ENCODE measurements at regions of chr12 and their contacts with region 1.

Region 1: GRCh38 chr12:121980191-121980891 is 41.3 kb upstream of the BCL7A start:
- DNase-seq: peak; percentile 98
- H3K4me3 ChIP-seq: peak overlapping the region; percentile 38
- H3K27ac ChIP-seq: peak overlapping the region; percentile 99
- H3K4me1 ChIP-seq: peaks cover 74% of the 10 kb centered on the region
- CTCF ChIP-seq: 0 out of 2 replicates have a peak, but pooled peaks have one; percentile 11

Region 2: DNA sequence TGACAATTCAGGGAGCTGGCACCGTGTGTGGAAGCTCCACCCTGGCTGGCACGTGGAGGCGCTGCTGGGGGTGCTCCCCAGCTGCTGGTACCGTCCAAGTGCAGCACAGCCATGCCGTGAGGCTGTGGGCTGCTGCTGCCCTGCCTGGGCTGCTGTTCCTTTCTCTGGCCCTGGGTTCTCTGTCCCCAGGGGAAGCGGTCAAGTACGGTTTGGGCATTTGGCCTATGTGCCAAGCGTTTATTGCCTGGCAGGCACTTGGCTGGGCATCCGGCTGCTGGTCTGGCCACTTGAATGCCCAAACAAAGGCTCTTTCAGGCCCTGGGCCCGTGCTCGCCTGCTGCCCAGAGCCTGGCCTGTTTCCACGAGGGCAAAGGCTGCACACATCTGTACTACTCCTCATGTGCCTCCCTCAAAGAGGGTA is 226.5 kb before region 1 on chr12:
- CTCF ChIA-PET with region 1: no interaction called
- POLR2A ChIA-PET with region 1: no interaction called
- intact Hi-C with region 1: no loop called
- DNase-seq: no peak
- H3K4me3 ChIP-seq: no peak overlapping the region
- H3K27ac ChIP-seq: no peak overlapping the region
- H3K4me1 ChIP-seq: no peaks in the 10 kb centered on the region
- CTCF ChIP-seq: no peak

Region 3: GRCh38 chr12:121802846-121803630 is 177.3 kb before region 1 on chr12:
- CTCF ChIA-PET with region 1: no interaction called
- POLR2A ChIA-PET with region 1: interaction called, 4 read pairs
- intact Hi-C with region 1: loop called (anchors 2 kb)
- DNase-seq: peak; percentile 93
- H3K4me3 ChIP-seq: peak overlapping the region; percentile 75
- H3K27ac ChIP-seq: peak overlapping the region; percentile 95
- H3K4me1 ChIP-seq: peaks cover 69% of the 10 kb centered on the region
- CTCF ChIP-seq: no peak

Region 4: GRCh38 chr12:121872546-121873215 is 107.7 kb before region 1 on chr12:
- CTCF ChIA-PET with region 1: no interaction called
- POLR2A ChIA-PET with region 1: no interaction called
- intact Hi-C with region 1: no loop called
- DNase-seq: no peak
- H3K4me3 ChIP-seq: no peak overlapping the region
- H3K27ac ChIP-seq: no peak overlapping the region
- H3K4me1 ChIP-seq: no peaks in the 10 kb centered on the region
- CTCF ChIP-seq: no peak

Region 5: GRCh38 chr12:121917979-121918678 is 62.2 kb before region 1 on chr12 and contains the start of gene CFAP251:
- CTCF ChIA-PET with region 1: interaction called, 5 read pairs
- POLR2A ChIA-PET with region 1: interaction called, 3 read pairs
- intact Hi-C with region 1: loop called (anchors 1 kb)
- DNase-seq: peak; percentile 96
- H3K4me3 ChIP-seq: peak within 1 kb of the TSS; percentile 69
- H3K27ac ChIP-seq: peak within 1 kb of the TSS; percentile 45
- H3K4me1 ChIP-seq: peaks cover 37% of the 10 kb centered on the region
- CTCF ChIP-seq: peak; percentile 75
- total RNA-seq, gene CFAP251: 4.1 and 6.6 TPM in 2 replicates

Region 6: DNA sequence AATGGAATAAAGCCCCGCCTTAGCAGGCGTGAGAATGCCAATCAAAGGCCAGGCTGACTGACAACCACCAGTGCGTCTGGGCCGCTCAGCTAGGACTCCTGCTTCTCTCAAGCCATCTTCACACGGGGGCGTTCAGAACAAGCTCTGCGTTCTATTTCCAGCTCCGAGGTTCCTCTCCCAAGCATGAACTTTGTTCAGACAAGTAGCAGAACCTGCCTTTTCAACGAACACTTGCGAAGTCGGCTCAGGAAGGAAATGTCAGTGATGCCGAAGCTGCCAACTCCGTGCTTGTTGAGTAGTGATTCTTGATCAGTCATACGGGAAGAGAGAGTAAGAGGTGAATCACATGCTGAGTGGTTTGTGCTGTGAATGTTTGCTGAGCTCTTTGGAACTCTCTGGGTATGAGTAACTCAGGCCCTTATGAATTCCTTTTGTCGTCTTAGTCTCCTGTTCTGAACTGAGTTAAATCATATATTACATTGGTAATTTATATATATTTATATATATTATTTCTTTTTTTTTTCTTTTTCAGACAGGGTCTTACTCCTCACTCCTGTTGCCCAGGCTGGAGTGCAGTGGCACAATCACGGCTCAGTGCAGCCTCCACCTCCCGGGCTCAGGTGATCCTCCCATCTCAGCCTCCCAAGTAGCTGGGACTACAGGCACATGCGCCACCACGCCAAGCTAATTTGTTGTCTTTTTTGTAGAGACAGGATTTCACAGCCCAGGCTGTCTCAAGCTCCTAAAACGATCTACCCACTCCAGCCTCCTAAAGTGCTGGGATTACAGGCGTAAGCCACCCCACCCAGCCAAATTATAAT is 11.9 kb after region 1 on chr12:
- CTCF ChIA-PET with region 1: no interaction called
- POLR2A ChIA-PET with region 1: interaction called, 18 read pairs
- intact Hi-C with region 1: no loop called
- DNase-seq: no peak
- H3K4me3 ChIP-seq: no peak overlapping the region
- H3K27ac ChIP-seq: peak overlapping the region; percentile 56
- H3K4me1 ChIP-seq: peaks cover 62% of the 10 kb centered on the region
- CTCF ChIP-seq: no peak

Region 7: GRCh38 chr12:122013791-122014590 is 33.6 kb after region 1 on chr12:
- CTCF ChIA-PET with region 1: interaction called, 5 read pairs
- POLR2A ChIA-PET with region 1: interaction called, 187 read pairs
- intact Hi-C with region 1: loop called (anchors 1 kb)
- DNase-seq: peak; percentile 79
- H3K4me3 ChIP-seq: peak overlapping the region; percentile 43
- H3K27ac ChIP-seq: peak overlapping the region; percentile 100
- H3K4me1 ChIP-seq: peaks cover 90% of the 10 kb centered on the region
- CTCF ChIP-seq: no peak

Region 8: DNA sequence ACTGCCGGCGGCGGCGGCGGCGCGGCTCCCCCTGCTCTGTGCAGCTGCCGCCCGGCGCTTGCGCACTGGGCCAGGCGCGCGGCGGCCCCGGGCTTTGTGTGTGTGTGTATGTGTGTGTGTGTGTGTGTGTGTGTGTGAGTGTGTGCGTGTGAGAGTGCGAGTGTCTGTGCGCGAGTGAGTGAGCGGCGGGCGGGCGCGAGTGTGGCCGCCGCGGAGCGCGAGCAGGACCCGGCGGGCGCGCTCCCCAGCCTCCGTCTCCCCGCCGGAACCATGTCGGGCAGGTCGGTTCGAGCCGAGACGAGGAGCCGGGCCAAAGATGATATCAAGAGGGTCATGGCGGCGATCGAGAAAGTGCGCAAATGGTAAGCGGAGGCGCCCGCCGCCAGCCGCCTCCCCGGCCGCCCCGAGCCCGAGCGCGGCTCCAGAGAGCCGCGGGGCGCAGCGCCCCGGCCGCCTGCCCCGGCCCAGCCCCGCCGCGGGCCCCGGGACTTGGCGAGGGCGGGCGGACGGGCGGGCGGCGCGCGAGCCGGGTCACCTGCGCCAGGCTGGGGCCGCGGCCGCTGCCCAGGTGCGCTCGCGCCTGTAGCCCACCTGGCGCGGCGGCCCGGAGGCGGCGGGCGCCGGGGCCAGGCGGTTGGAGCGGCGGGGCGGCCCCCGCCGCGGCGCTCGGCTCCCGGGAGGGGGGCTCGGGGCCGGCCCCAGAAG is 41.6 kb after region 1 on chr12 and contains the start of gene BCL7A:
- CTCF ChIA-PET with region 1: interaction called, 3 read pairs
- POLR2A ChIA-PET with region 1: interaction called, 15 read pairs
- intact Hi-C with region 1: no loop called
- DNase-seq: peak; percentile 83
- H3K4me3 ChIP-seq: peak within 1 kb of the TSS; percentile 95
- H3K27ac ChIP-seq: peak within 1 kb of the TSS; percentile 94
- H3K4me1 ChIP-seq: peaks cover 68% of the 10 kb centered on the region
- CTCF ChIP-seq: no peak
- total RNA-seq, gene BCL7A: 66.2 and 76.2 TPM in 2 replicates

Region 9: DNA sequence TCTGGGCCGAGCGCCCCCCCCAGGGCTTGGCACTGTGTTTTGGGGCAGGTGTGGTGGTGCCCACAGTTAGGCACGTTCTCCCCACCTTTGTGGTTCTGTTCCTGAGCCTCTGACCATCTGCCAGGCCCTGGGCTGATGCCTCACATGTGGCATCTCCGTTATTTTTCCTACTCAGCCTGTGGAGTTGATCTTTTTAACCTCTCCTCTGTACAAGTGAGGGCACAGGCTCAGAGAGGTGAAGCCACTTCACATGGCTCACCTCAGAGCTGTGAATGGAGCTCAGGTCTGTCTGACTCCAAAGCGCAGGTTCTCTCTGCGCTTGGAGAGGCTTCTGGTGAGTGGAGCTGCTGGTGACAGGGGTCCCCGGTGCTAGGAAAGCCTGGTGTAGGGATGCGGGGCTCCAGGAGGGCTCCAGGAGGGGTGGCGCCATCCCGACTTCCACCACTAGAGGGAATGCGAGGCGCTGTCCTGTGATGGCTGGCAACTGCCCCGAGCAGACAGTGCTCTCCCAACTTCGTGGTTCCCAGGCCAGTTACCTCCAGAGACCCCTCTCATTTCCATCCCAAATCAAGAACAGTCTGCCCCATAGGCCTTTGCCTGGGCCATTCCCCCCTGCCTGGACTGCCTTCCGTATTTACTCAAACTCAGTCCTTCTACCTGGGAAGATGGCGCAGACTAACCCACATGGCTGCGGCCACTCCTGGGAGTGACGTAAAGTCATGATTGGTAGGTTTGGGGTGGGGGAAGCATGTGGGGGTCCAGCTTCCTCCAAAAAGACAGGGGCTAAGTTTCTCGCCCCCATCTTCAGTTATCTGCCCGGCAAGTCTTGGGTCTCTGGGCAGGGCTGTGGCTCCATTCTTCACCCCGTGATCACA is 51.2 kb after region 1 on chr12:
- CTCF ChIA-PET with region 1: interaction called, 3 read pairs
- POLR2A ChIA-PET with region 1: interaction called, 15 read pairs
- intact Hi-C with region 1: loop called (anchors 1 kb)
- DNase-seq: peak; percentile 49
- H3K4me3 ChIP-seq: peak overlapping the region; percentile 33
- H3K27ac ChIP-seq: peak overlapping the region; percentile 94
- H3K4me1 ChIP-seq: peaks cover 64% of the 10 kb centered on the region
- CTCF ChIP-seq: peak; percentile 81